Naive thymus-derived CD4-positive, alpha-beta T cell (primary cell): ENCODE measurements at regions of chr6 and their contacts with region 1.

Region 1: DNA sequence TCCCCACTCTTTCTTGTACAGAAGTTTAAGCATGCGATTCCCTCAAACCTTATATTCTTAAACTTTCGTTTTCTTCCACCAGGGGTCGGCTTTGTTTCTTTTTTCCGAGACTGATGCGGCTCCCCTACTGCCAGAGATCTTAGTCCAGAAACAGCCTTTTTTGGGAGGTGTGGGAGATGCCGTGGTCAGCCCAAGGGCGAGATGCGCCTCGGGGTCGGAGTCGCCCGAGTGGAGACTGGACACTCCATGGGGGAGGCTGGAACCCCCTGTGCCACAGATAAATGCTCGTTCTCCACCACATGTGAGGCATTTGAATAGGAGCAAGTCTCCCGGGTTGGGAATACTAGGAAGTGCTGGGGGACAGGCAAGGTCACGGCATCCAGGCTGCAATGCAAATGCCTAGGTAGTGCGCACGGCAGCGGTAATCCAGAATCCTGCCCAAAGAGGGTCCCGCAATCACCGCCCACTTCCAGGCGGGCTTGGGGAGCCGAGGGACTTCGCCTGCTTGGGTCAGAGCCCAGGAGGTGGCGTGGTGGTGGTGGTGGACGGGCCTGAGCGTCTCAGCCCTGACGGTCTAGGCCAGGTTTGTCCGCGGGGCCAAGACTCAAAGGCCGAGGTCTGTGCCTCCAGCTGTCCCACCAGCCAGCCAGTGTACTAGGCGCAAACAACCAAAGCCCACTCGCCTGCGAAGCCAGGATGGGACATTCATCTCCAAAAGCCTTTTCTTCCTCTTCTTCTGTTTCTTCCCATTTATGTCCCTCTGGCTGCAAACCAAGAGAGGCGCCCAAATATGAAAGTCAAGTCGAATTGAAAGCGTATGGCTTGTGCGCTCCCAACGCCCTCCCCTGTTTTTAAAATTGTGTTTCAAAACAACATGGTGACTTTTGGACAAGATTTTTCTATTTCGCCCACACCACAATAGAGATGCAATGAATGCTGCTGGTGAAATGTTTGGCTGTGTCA is 39.3 kb upstream of the OSTM1 start:
- DNase-seq: no peak
- ATAC-seq: no peak
- H3K4me3 ChIP-seq: no peak overlapping the region
- H3K4me3 Mint-ChIP-seq: peak overlapping the region; percentile 17 to 86 (median 60)
- H3K27ac ChIP-seq: no peak overlapping the region
- H3K27ac Mint-ChIP-seq: peak overlapping the region in 1 of 9 donors; percentile 14
- H3K4me1 ChIP-seq: peaks cover 17 to 33% of the 10 kb centered on the region in 2 donors
- H3K4me1 Mint-ChIP-seq: peaks cover 30 to 47% (median 40%) of the 10 kb centered on the region in 7 donors
- H3K27me3 ChIP-seq: peaks cover 8 to 25% of the 10 kb centered on the region in 2 donors
- H3K27me3 Mint-ChIP-seq: peaks cover 72 to 89% (median 85%) of the 10 kb centered on the region in 5 donors

Region 2: GRCh38 chr6:107977283-107977682 is 136.6 kb before region 1 on chr6:
- CTCF ChIA-PET with region 1: no interaction called
- POLR2A ChIA-PET with region 1: no interaction called
- intact Hi-C with region 1: no loop called
- DNase-seq: no peak
- ATAC-seq: no peak
- H3K4me3 ChIP-seq: no peak overlapping the region
- H3K4me3 Mint-ChIP-seq: no peak overlapping the region
- H3K27ac ChIP-seq: no peak overlapping the region
- H3K27ac Mint-ChIP-seq: no peak overlapping the region
- H3K4me1 ChIP-seq: no peaks in the 10 kb centered on the region
- H3K4me1 Mint-ChIP-seq: peaks cover 0 to 12% (median 0%) of the 10 kb centered on the region in 7 donors
- H3K27me3 ChIP-seq: no peaks in the 10 kb centered on the region
- H3K27me3 Mint-ChIP-seq: peaks cover 0 to 15% (median 0%) of the 10 kb centered on the region in 5 donors

Region 3: DNA sequence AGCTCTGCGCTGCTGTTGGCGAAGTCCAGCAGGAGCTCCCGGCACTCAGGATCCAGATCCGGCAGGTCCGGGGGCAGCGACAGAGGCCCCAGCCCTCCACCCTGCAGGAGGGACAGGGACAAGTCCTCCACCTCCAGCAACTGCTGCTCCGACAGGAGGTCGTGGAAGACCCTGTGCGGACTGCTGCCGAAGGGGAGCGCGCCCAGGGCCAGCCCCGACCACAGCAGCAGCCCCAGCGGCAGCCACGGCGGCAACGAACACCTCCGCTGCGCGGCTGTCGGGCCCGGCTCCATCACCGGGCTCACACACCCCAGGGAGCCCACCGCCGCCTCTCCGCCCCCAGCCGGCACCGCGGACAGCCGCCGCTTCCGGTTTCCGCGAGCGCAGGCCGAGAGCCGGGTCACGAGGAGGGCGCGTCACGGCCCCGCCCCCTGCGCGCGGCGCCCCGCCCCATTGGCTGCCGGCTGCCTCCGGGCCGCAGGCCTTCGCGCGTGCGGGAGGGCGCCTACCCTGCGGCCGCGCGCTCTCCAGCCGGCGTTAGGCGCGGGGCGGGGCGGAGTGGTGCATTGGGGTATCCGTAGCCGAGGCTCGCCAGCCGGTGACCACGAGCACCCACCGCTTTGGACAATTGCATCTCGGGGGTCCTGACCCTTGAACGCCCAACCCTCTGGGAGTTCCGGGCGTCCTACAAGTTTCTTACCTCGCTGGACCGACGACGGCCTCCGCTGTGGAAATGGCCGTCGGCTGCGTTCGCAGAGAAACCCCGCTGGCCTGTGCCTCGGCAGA is 39.3 kb before region 1 on chr6 and contains the start of gene OSTM1:
- CTCF ChIA-PET with region 1: no interaction called
- POLR2A ChIA-PET with region 1: no interaction called
- intact Hi-C with region 1: loop called in 1 of 2 experiments (anchors 2 kb)
- DNase-seq: peak; percentile 88 to 98 (median 94)
- ATAC-seq: peak; percentile 99
- H3K4me3 ChIP-seq: peak within 1 kb of the TSS; percentile 99
- H3K4me3 Mint-ChIP-seq: peak within 1 kb of the TSS; percentile 84 to 94 (median 90)
- H3K27ac ChIP-seq: peak within 1 kb of the TSS; percentile 89
- H3K27ac Mint-ChIP-seq: peak within 1 kb of the TSS; percentile 81 to 98 (median 91)
- H3K4me1 ChIP-seq: peaks cover 18% of the 10 kb centered on the region in 2 donors
- H3K4me1 Mint-ChIP-seq: peaks cover 11 to 35% (median 23%) of the 10 kb centered on the region in 7 donors
- H3K27me3 ChIP-seq: no peaks in the 10 kb centered on the region
- H3K27me3 Mint-ChIP-seq: peaks cover 0 to 25% (median 4%) of the 10 kb centered on the region in 5 donors
- total RNA-seq, gene OSTM1: 25.0 to 48.9 (median 36.7) TPM

Region 4: DNA sequence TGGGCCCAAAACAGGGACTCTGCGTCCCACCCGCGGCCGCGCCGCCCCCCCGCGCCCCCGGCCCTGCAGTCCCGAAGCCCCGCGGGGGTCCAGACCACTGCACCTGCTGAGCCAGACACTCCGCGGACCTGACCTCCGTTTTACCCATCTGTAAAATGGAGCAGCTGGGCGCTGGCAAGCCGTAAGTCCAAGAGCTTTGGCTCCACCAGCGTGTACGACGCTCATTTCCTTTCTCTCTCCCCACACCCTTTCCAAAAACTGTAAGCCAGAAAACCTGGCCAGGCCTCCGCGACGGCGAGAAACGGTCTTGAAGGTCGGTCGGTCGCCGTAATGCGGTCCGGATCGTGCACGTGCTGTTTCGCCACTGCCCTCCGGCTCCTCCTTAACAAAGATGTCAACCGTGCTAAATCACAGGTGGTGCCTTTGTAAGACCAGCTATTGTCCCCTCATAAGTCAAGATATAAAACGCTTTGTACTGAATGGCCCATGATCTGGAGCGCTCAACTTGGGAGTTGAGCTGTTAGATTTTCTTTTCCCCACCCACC is 44.2 kb after region 1 on chr6:
- CTCF ChIA-PET with region 1: no interaction called
- POLR2A ChIA-PET with region 1: no interaction called
- intact Hi-C with region 1: loop called in 1 of 2 experiments (anchors 2 kb)
- DNase-seq: no peak
- ATAC-seq: no peak
- H3K4me3 ChIP-seq: no peak overlapping the region
- H3K4me3 Mint-ChIP-seq: peak overlapping the region; percentile 27 to 89 (median 78)
- H3K27ac ChIP-seq: no peak overlapping the region
- H3K27ac Mint-ChIP-seq: peak overlapping the region in 1 of 9 donors; percentile 86
- H3K4me1 ChIP-seq: peaks cover 0 to 17% of the 10 kb centered on the region in 2 donors
- H3K4me1 Mint-ChIP-seq: peaks cover 6 to 22% (median 15%) of the 10 kb centered on the region in 7 donors
- H3K27me3 ChIP-seq: peaks cover 4 to 21% of the 10 kb centered on the region in 2 donors
- H3K27me3 Mint-ChIP-seq: peaks cover 85 to 92% (median 88%) of the 10 kb centered on the region in 5 donors

Region 5: GRCh38 chr6:108359901-108360882 is 246.4 kb after region 1 on chr6:
- CTCF ChIA-PET with region 1: no interaction called
- POLR2A ChIA-PET with region 1: no interaction called
- intact Hi-C with region 1: loop called in 1 of 2 experiments (anchors 10 kb)
- DNase-seq: no peak
- ATAC-seq: no peak
- H3K4me3 ChIP-seq: no peak overlapping the region
- H3K4me3 Mint-ChIP-seq: no peak overlapping the region
- H3K27ac ChIP-seq: no peak overlapping the region
- H3K27ac Mint-ChIP-seq: no peak overlapping the region
- H3K4me1 ChIP-seq: no peaks in the 10 kb centered on the region
- H3K4me1 Mint-ChIP-seq: peaks cover 0 to 13% (median 0%) of the 10 kb centered on the region in 7 donors
- H3K27me3 ChIP-seq: no peaks in the 10 kb centered on the region
- H3K27me3 Mint-ChIP-seq: no peaks in the 10 kb centered on the region

Region 6: DNA sequence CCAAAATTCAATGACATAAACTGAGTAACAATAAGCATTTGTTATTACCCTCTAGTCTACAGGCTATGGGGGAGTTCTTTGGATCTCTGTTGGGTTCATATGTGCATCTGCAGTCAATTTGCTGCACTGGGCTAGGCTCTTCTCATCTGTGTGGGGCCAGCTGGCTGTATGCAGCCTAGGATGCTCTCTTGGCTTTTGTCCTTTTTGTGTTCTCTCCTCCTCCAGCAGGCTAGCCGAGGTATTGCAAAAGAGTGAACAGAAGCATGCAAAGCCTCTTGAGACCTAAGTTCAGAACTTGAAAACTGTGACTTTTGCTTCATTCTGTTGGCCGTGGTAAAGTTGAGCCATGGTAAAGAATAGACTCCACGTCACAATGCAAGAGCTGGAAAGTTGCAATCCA is 384.0 kb after region 1 on chr6:
- CTCF ChIA-PET with region 1: no interaction called
- POLR2A ChIA-PET with region 1: no interaction called
- intact Hi-C with region 1: no loop called
- DNase-seq: peak in 1 of 9 donors; percentile 8
- ATAC-seq: no peak
- H3K4me3 ChIP-seq: no peak overlapping the region
- H3K4me3 Mint-ChIP-seq: no peak overlapping the region
- H3K27ac ChIP-seq: no peak overlapping the region
- H3K27ac Mint-ChIP-seq: no peak overlapping the region
- H3K4me1 ChIP-seq: no peaks in the 10 kb centered on the region
- H3K4me1 Mint-ChIP-seq: no peaks in the 10 kb centered on the region
- H3K27me3 ChIP-seq: no peaks in the 10 kb centered on the region
- H3K27me3 Mint-ChIP-seq: peaks cover 0 to 6% (median 0%) of the 10 kb centered on the region in 5 donors

Region 7: GRCh38 chr6:108526739-108527174 is 412.9 kb after region 1 on chr6:
- CTCF ChIA-PET with region 1: no interaction called
- POLR2A ChIA-PET with region 1: no interaction called
- intact Hi-C with region 1: loop called in 1 of 2 experiments (anchors 1 kb)
- DNase-seq: peak in 3 of 9 donors; percentile 7 to 28 (median 17)
- ATAC-seq: peak; percentile 47
- H3K4me3 ChIP-seq: no peak overlapping the region
- H3K4me3 Mint-ChIP-seq: no peak overlapping the region
- H3K27ac ChIP-seq: no peak overlapping the region
- H3K27ac Mint-ChIP-seq: no peak overlapping the region
- H3K4me1 ChIP-seq: no peaks in the 10 kb centered on the region
- H3K4me1 Mint-ChIP-seq: no peaks in the 10 kb centered on the region
- H3K27me3 ChIP-seq: no peaks in the 10 kb centered on the region
- H3K27me3 Mint-ChIP-seq: peaks cover 0 to 9% (median 0%) of the 10 kb centered on the region in 5 donors